PC-9 (cell line): ENCODE measurements at regions of chr17 and their contacts with region 1.

Region 1: DNA sequence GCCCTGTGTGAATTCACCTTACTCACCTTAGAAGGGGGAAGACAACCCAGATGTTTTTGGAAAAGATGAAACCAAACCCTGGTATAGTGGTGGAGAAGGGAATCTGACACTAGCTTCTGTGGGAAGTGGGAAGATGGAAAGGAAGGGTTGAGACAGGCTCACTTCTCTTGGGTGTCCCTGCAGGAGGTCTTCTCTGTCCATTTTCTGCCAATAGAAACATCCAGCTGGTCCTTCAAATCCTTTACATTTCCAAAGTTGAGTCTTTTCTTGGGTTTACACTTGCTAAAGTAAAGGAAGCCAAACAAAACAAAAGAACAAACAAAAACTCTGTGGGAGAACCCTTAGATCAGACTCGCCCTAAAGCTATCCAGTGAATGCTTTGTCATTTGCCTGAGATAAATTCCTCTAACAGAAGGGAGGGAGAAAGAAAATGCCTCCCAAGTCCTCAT is 10.2 kb downstream of the HOXB1 start:
- DNase-seq: peak in 1 of 2 experiments; percentile 71
- H3K4me3 ChIP-seq: no peak overlapping the region
- H3K27ac ChIP-seq: peak overlapping the region; percentile 21; the same call in 1 of the 2 replicates
- H3K4me1 ChIP-seq: peaks cover 29% of the 10 kb centered on the region
- H3K27me3 ChIP-seq: no peaks in the 10 kb centered on the region
- CTCF ChIP-seq: no peak

Region 2: GRCh38 chr17:48505787-48506645 is 14.6 kb before region 1 on chr17:
- CTCF ChIA-PET with region 1: interaction called, 16 read pairs
- POLR2A ChIA-PET with region 1: interaction called, 4 read pairs
- intact Hi-C with region 1: no loop called
- DNase-seq: peak; percentile 58 to 99
- H3K4me3 ChIP-seq: no peak overlapping the region
- H3K27ac ChIP-seq: peak overlapping the region; percentile 43
- H3K4me1 ChIP-seq: peaks cover 47% of the 10 kb centered on the region
- H3K27me3 ChIP-seq: no peaks in the 10 kb centered on the region
- CTCF ChIP-seq: no peak; the same call in 1 of the 2 replicates

Region 3: GRCh38 chr17:48586355-48587258 is 66.0 kb after region 1 on chr17:
- CTCF ChIA-PET with region 1: interaction called, 10 read pairs
- POLR2A ChIA-PET with region 1: interaction called, 3 read pairs
- intact Hi-C with region 1: no loop called
- DNase-seq: no peak
- H3K4me3 ChIP-seq: peak overlapping the region; percentile 67; the same call in 1 of the 2 replicates
- H3K27ac ChIP-seq: no peak overlapping the region
- H3K4me1 ChIP-seq: peaks cover 12% of the 10 kb centered on the region
- H3K27me3 ChIP-seq: no peaks in the 10 kb centered on the region
- CTCF ChIP-seq: no peak